Tibial artery (tissue), 4 donors: ENCODE measurements at regions of chr5 and their contacts with region 1.

Region 1: DNA sequence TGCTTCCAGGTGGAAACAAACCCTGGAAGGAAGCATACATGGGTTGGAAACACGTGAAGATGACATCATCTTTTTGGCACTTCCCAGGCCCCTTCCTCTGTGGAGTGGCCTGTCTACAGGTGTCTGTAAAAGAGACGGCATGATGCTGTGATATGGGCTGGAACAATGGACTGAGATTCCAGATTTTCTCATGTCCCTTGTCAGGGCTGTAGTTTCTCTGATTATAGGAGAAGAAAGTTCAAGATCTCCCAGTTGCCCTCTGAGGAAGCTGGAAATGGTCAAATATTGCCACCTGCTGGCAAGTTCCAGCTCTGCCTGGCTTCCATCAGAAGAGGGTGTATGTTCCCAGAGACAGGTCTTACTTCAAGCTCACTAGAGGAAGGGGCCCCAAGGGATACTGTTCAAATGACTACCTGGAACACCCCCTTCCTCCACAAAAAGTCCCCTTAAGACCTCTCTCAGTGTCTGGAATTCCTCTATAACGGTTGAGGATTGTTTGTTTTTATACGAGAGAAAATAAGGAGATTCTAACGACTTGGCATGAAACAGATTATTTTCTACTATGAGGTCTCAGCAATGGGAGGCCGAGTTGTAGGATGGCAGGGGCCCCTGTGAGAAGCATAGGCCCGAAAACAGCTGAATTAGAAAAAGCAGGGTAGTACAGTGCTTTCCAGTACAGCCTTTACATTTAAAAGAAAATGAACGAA is 7.3 kb upstream of the ANXA6 start:
- DNase-seq: peak; percentile 81 to 85
- H3K4me3 ChIP-seq: no peak overlapping the region
- H3K27ac ChIP-seq: no peak overlapping the region
- H3K4me1 ChIP-seq: peaks cover 0 to 3% (median 0%) of the 10 kb centered on the region in 4 donors
- H3K27me3 ChIP-seq: peaks cover 0 to 3% of the 10 kb centered on the region in 2 donors
- CTCF ChIP-seq: peak; percentile 91

Region 2: GRCh38 chr5:150540615-150541396 is 624.0 kb before region 1 on chr5:
- intact Hi-C with region 1: no loop called
- DNase-seq: peak; percentile 46 to 80
- H3K4me3 ChIP-seq: no peak overlapping the region
- H3K27ac ChIP-seq: peak overlapping the region; percentile 69 to 75
- H3K4me1 ChIP-seq: peaks cover 0 to 44% (median 21%) of the 10 kb centered on the region in 4 donors
- H3K27me3 ChIP-seq: no peaks in the 10 kb centered on the region
- CTCF ChIP-seq: no peak

Region 3: GRCh38 chr5:151002250-151002649 is 162.6 kb before region 1 on chr5:
- intact Hi-C with region 1: loop called (anchors 5 kb)
- DNase-seq: no peak
- H3K4me3 ChIP-seq: no peak overlapping the region
- H3K27ac ChIP-seq: no peak overlapping the region
- H3K4me1 ChIP-seq: peaks cover 0 to 40% (median 33%) of the 10 kb centered on the region in 4 donors
- H3K27me3 ChIP-seq: no peaks in the 10 kb centered on the region
- CTCF ChIP-seq: peak; percentile 62 to 78

Region 4: DNA sequence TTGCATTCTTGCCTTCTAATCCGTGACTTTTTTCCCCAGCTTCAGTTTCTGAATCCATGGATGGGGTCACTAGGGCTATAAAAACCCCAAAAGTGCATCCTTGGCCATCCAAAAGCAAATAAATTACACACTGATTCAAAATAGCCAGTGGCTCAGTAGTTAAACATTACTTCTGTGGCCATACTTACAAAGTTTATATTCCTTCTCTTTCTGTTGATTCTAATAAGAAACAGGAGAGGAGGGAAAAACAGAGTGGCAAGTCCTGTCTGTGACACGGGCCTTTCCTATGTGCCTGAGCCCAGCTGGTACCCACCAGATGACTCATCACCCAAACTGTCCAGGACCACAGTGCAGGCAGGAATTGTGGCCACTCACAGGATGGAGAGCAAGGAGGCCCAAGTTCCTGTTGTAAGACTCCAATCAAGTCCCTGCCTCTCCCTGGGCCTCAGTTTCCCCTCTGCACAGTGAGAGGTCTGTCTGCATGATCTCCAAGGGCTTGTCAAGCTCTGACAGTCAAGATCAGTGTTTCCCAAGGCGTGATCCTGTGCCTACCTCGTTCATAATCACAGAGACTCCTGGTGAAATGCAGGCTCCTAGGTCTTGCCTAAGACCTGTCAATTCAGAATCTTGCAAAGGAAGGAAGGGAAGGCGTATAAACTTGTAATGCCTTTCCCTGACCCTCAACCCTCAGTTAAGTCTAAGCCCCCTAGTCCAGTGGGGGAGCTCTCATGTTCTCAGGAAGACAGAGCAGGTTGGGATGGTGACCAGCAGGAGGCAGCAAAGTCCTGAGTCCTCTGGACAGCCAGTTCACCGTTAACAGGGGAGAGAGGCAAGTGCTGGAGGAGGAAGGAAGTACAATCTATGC is 113.5 kb before region 1 on chr5:
- intact Hi-C with region 1: loop called (anchors 5 kb)
- DNase-seq: peak; percentile 79 to 88
- H3K4me3 ChIP-seq: no peak overlapping the region
- H3K27ac ChIP-seq: no peak overlapping the region
- H3K4me1 ChIP-seq: peaks cover 0 to 7% (median 3%) of the 10 kb centered on the region in 4 donors
- H3K27me3 ChIP-seq: no peaks in the 10 kb centered on the region
- CTCF ChIP-seq: peak; percentile 82 to 90

Region 5: GRCh38 chr5:151126199-151126645 is 38.6 kb before region 1 on chr5:
- intact Hi-C with region 1: loop called (anchors 2 kb)
- DNase-seq: peak; percentile 73 to 78
- H3K4me3 ChIP-seq: no peak overlapping the region
- H3K27ac ChIP-seq: no peak overlapping the region
- H3K4me1 ChIP-seq: peaks cover 0 to 12% (median 7%) of the 10 kb centered on the region in 4 donors
- H3K27me3 ChIP-seq: no peaks in the 10 kb centered on the region
- CTCF ChIP-seq: peak; percentile 72 to 87

Region 6: GRCh38 chr5:151239237-151239861 is 74.5 kb after region 1 on chr5:
- intact Hi-C with region 1: loop called (anchors 5 kb)
- DNase-seq: peak; percentile 65 to 82
- H3K4me3 ChIP-seq: peak overlapping the region; percentile 34 to 40
- H3K27ac ChIP-seq: peak overlapping the region; percentile 58 to 85
- H3K4me1 ChIP-seq: peaks cover 0 to 29% (median 4%) of the 10 kb centered on the region in 4 donors
- H3K27me3 ChIP-seq: no peaks in the 10 kb centered on the region
- CTCF ChIP-seq: peak; percentile 67 to 70